IMR-90 (cell line): ENCODE measurements at regions of chr1 and their contacts with region 1.

Region 1: DNA sequence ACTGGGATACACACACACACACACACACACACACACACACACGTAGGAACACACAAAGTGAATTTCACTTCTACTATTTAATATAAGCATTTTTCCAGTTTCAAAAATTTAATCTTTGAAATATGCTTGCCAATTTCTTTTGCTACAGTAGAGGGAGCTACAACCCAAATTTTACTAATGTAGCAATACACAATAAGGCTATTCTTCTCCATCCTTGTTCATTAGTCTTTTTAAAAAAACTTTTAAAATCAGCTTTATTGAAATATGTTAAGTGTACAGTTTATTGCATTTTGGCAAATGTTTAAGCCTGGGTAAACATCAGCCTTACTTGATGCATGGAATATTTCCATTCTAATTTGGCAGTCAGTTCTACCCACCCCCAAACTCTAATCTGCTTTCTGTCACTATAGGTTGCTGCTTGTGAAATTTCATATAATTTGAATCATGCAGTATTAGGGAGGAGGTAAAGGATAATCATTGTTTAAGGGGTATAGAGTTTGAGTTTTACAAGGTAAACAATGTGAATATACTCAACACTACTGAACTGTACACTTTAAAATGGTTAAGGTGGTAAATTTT is 93.0 kb upstream of the TENT5C start:
- DNase-seq: peak; percentile 40
- ATAC-seq: peak; percentile 72
- H3K4me3 ChIP-seq: no peak overlapping the region
- H3K27ac ChIP-seq: no peak overlapping the region
- H3K4me1 ChIP-seq: no peaks in the 10 kb centered on the region
- H3K27me3 ChIP-seq: no peaks in the 10 kb centered on the region
- CTCF ChIP-seq: peak; percentile 84
- POLR2A ChIP-seq: no peak
- RAD21 ChIP-seq: peak; percentile 77

Region 2: DNA sequence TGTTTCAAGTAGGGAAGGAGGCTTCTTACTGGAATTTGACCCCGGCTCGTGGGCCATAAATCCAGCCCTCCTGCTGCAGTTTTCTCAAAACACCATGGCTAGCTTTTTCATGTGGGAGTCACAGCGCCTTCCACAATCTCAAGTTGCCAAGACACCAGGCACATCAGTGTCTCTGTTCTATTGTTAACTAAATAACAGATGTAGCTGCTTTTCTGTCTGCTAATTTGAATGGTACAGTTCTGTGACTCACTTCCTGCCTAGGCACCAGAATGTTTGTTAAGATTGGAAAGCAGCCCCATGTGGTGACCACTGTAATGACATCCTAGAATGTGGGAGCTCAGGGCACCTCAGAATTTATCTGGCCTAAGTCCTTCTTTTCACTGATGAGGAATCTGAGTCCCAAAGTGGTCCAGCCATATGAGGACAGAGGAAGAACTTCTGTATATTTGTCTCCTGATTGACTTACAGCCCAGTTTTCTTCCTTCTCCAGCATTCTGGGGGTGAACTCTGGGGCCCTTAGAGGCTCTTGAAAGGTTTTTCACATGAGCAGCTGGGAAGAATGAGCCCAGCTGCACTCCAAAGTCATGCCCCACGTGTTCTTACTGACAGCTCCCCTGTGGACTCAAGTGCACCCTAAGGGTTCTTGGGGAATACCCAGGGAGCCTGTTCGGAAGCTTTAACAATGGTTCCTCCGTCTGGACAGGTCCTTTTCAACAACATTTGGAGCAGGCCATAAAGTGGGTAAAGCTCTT is 418.8 kb before region 1 on chr1:
- CTCF ChIA-PET with region 1: no interaction called
- POLR2A ChIA-PET with region 1: no interaction called
- dilution Hi-C with region 1: no loop called
- in situ Hi-C with region 1: no loop called
- intact Hi-C with region 1: no loop called
- DNase-seq: peak; percentile 75
- ATAC-seq: peak; percentile 8
- H3K4me3 ChIP-seq: no peak overlapping the region
- H3K27ac ChIP-seq: peak overlapping the region; percentile 67
- H3K4me1 ChIP-seq: peaks cover 24% of the 10 kb centered on the region
- H3K27me3 ChIP-seq: no peaks in the 10 kb centered on the region
- CTCF ChIP-seq: peak; percentile 47
- POLR2A ChIP-seq: no peak
- RAD21 ChIP-seq: peak; percentile 28; the same call in 1 of the 2 replicates

Region 3: DNA sequence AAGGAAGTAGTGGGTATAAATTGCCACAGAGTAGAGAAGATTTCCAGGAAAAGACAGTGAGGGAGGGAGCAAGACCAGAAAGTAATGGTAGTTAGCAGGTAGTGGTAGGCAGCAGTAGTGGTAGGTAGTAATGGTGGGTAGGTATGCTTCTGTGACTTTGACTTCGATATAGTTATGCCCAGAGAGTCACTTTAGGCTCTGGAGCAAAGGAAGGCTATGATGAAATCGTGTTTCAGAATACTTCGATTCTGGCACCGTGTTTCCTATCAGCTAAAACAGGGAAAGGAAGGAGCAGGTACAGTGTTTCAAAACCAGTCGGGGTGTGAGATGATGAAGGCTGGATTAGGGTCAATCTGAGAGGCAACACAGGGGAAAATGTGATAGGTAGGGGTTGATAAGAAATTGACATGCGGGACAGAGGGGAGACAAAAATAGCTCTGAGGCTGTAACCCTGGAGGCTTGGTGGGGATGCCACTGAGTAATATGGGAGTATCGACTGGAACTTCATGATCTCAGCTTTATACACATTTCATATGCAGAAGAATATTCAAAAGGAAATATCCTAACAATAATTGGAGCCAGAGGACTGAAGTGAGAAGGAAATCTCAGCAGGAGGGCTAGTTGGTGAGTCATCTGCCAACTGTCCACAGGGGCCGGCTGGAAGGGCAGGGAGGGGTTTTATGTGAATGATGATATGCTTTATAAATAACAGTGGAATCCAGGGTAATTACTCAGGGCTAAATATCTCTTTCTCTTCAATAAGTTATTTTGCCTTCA is 366.1 kb before region 1 on chr1:
- CTCF ChIA-PET with region 1: no interaction called
- POLR2A ChIA-PET with region 1: no interaction called
- dilution Hi-C with region 1: no loop called
- in situ Hi-C with region 1: no loop called
- intact Hi-C with region 1: loop called (anchors 5 kb)
- DNase-seq: peak; percentile 95
- ATAC-seq: peak; percentile 80
- H3K4me3 ChIP-seq: no peak overlapping the region
- H3K27ac ChIP-seq: peak overlapping the region; percentile 69
- H3K4me1 ChIP-seq: peaks cover 14% of the 10 kb centered on the region
- H3K27me3 ChIP-seq: no peaks in the 10 kb centered on the region
- CTCF ChIP-seq: no peak
- POLR2A ChIP-seq: no peak
- RAD21 ChIP-seq: no peak

Region 4: GRCh38 chr1:117312225-117313138 is 200.3 kb before region 1 on chr1:
- CTCF ChIA-PET with region 1: no interaction called
- POLR2A ChIA-PET with region 1: no interaction called
- dilution Hi-C with region 1: no loop called
- in situ Hi-C with region 1: no loop called
- intact Hi-C with region 1: loop called (anchors 5 kb)
- DNase-seq: peak; percentile 83
- ATAC-seq: peak; percentile 96
- H3K4me3 ChIP-seq: no peak overlapping the region
- H3K27ac ChIP-seq: peak overlapping the region; percentile 55; the same call in 1 of the 2 replicates
- H3K4me1 ChIP-seq: peaks cover 2% of the 10 kb centered on the region
- H3K27me3 ChIP-seq: peaks cover 2% of the 10 kb centered on the region; the same call in 1 of the 2 replicates
- CTCF ChIP-seq: peak; percentile 67
- POLR2A ChIP-seq: no peak
- RAD21 ChIP-seq: peak; percentile 49

Region 5: DNA sequence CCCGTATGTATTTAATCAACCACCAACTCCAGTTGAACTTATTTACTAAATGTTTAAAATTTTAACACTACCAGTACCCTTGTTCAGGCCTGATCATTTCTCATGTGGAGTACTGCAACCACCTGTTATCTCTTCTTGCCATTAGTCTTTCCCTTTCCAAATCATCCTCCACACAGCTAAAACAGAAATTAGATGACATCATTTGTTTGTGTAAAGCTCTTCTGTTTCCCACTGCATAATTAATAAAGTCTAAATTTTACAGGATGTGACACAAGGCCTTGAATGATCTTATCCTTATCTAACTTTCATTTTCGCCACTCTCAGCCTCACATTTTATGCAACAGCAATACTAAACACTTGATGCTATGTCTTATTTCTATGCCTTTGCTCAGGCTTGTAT is 392.2 kb after region 1 on chr1:
- CTCF ChIA-PET with region 1: no interaction called
- POLR2A ChIA-PET with region 1: no interaction called
- dilution Hi-C with region 1: no loop called
- in situ Hi-C with region 1: loop called (anchors 5 kb)
- intact Hi-C with region 1: no loop called
- DNase-seq: no peak
- ATAC-seq: no peak
- H3K4me3 ChIP-seq: no peak overlapping the region
- H3K27ac ChIP-seq: no peak overlapping the region
- H3K4me1 ChIP-seq: no peaks in the 10 kb centered on the region
- H3K27me3 ChIP-seq: no peaks in the 10 kb centered on the region
- CTCF ChIP-seq: no peak
- POLR2A ChIP-seq: no peak
- RAD21 ChIP-seq: no peak